PC-9 (cell line): ENCODE measurements at regions of chr3 and their contacts with region 1.

Region 1: GRCh38 chr3:53347261-53348064 is at the start of gene DCP1A:
- DNase-seq: peak; percentile 82 to 96
- H3K4me3 ChIP-seq: peak within 1 kb of the TSS; percentile 83
- H3K27ac ChIP-seq: peak within 1 kb of the TSS; percentile 74
- H3K4me1 ChIP-seq: peaks cover 18% of the 10 kb centered on the region
- H3K27me3 ChIP-seq: no peaks in the 10 kb centered on the region
- CTCF ChIP-seq: no peak
- total RNA-seq, gene DCP1A: 17.0 and 22.7 TPM in 2 replicates

Region 2: DNA sequence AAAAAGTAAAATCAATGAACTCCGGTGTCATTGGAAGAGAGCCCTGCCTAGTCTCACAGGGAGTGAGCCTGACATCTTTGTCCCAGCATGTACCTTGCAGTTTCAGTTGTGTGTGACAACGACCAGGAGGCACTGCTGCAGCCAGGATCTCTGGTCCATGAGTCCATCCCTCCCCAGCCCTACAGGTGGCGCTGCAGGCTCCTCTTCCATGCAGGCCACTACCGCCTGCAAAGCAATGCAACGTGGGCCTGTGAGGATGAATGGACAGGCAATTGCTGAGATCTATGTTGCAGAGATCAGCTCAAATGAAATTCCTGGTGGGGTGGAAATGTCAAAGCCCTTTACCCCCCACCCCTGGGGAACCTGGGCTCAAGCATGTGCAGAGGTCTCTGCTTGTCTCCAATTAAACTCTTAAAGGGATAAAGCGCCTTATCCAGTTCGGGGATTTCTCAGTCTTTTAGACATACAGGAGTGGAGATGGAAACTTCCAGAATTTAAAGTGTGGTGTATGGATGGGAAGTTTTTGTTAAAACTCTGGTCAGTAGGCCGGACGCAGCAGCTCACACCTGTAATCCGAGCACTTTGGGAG is 127.5 kb before region 1 on chr3:
- CTCF ChIA-PET with region 1: interaction called, 3 read pairs
- POLR2A ChIA-PET with region 1: no interaction called
- intact Hi-C with region 1: loop called (anchors 5 kb)
- DNase-seq: peak; percentile 61 to 87
- H3K4me3 ChIP-seq: no peak overlapping the region
- H3K27ac ChIP-seq: no peak overlapping the region
- H3K4me1 ChIP-seq: no peaks in the 10 kb centered on the region
- H3K27me3 ChIP-seq: no peaks in the 10 kb centered on the region
- CTCF ChIP-seq: peak; percentile 88

Region 3: GRCh38 chr3:53236112-53236841 is 111.2 kb before region 1 on chr3:
- CTCF ChIA-PET with region 1: no interaction called
- POLR2A ChIA-PET with region 1: no interaction called
- intact Hi-C with region 1: loop called (anchors 5 kb)
- DNase-seq: peak; percentile 72 to 75
- H3K4me3 ChIP-seq: no peak overlapping the region
- H3K27ac ChIP-seq: peak overlapping the region; percentile 95
- H3K4me1 ChIP-seq: peaks cover 60% of the 10 kb centered on the region
- H3K27me3 ChIP-seq: no peaks in the 10 kb centered on the region
- CTCF ChIP-seq: no peak

Region 4: DNA sequence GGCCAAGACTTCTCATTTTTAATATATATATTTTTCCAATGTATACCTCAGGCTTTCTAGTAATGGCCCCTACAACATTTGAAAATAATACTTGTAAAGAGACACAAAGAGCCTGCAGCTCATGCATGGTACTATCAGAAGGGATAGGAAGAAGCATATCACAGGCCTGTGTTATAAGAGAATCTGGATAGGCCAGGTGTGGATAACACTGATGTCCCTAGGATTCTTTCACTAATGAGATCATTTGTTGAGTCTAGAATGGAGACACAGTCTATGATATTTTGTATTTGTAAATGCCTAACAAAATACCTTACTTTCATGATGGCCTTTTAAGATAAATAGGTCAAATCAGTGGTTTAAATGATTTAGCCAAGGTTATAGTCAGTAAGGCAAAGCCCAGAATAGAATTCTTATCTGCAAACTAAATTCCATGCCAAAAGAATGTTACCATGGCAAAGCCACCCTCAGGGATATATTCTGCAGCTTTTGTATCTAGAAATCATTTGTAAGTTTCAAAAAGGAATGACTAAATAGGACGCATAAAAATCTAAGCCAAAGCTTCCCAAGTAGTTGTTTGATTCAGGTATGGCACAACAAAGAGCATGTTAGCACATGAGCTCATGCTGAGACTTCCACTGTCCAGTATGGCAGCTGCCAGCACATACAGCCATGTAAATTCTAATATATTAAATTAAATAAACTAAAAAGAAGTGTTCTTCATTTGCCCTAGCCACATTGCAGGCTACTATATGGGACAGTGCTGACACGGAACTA is 10.1 kb before region 1 on chr3:
- CTCF ChIA-PET with region 1: no interaction called
- POLR2A ChIA-PET with region 1: no interaction called
- intact Hi-C with region 1: no loop called
- DNase-seq: no peak
- H3K4me3 ChIP-seq: no peak overlapping the region
- H3K27ac ChIP-seq: no peak overlapping the region
- H3K4me1 ChIP-seq: no peaks in the 10 kb centered on the region
- H3K27me3 ChIP-seq: no peaks in the 10 kb centered on the region
- CTCF ChIP-seq: no peak

Region 5: DNA sequence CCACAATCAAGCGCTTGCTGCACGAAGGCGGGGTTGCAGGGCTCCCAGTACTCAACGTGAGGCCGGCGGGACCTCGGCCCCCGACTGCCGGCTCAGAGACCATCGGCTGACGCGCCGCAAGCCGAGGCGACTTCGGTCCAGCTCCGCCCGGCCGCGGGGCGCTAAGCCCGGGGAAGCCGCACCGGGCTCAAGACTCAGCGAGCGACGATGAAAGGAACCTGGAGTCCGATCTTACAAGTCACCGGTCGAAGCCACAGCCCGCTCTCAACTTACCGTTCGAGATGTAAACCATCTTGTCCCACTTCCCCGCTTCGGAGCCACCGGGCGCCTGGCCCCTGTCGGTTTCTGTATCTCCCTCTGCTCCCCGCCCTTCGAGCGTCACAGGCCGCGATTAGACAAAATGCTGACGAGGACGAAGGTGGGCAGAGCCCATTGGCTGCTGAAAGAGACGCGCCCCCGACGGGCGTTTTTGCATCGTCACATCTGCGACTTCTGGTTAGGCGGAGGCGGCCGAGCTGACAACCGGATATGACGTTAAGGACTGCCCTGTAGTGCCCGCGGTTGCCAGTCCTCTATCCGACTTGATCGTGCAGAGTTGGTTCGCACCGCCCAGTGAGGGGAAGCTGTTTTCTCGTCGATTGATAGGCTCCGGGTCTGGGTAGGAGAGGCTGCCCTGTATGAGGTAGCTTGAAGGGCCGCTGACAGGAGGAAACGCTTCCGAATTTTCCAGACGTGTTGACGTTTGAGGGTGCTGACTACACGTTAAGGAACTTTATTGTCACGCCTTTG is 544.2 kb after region 1 on chr3 and contains the start of gene SELENOK:
- CTCF ChIA-PET with region 1: no interaction called
- POLR2A ChIA-PET with region 1: interaction called, 11 read pairs
- intact Hi-C with region 1: loop called (anchors 5 kb)
- DNase-seq: peak; percentile 95 to 96
- H3K4me3 ChIP-seq: peak within 1 kb of the TSS; percentile 77
- H3K27ac ChIP-seq: peak within 1 kb of the TSS; percentile 72
- H3K4me1 ChIP-seq: peaks cover 10% of the 10 kb centered on the region
- H3K27me3 ChIP-seq: no peaks in the 10 kb centered on the region
- CTCF ChIP-seq: no peak
- total RNA-seq, gene SELENOK: 19.9 and 21.9 TPM in 2 replicates

Region 6: GRCh38 chr3:54278961-54279583 is 931.6 kb after region 1 on chr3:
- CTCF ChIA-PET with region 1: no interaction called
- POLR2A ChIA-PET with region 1: no interaction called
- intact Hi-C with region 1: no loop called
- DNase-seq: no peak
- H3K4me3 ChIP-seq: no peak overlapping the region
- H3K27ac ChIP-seq: no peak overlapping the region
- H3K4me1 ChIP-seq: no peaks in the 10 kb centered on the region
- H3K27me3 ChIP-seq: peaks cover 10% of the 10 kb centered on the region; the same call in 1 of the 2 replicates
- CTCF ChIP-seq: no peak